OCI-LY7 (cell line): ENCODE measurements at regions of chr3 and their contacts with region 1.

Region 1: DNA sequence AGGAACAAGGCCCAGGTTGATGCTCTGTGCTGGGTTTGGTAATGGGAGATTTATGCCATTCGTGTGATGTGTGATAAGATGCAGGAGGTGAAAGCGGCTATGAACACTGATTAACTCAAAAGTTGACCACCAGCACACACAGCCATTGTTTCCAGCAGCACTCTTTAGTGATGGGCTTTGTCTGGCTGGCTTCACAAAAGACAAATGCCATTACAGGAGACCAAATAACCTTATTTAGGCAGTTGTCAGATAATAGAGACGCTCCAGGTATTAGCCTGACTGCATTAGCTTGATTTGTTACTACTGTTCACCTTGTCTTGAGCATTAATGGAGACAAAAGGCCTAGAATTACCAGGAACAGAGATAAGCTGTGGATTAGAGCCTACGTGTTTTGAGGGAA is 5.1 kb downstream of the HESX1 start:
- DNase-seq: no peak
- H3K4me3 ChIP-seq: no peak overlapping the region
- H3K27ac ChIP-seq: no peak overlapping the region
- H3K4me1 ChIP-seq: peaks cover 17% of the 10 kb centered on the region
- CTCF ChIP-seq: no peak

Region 2: DNA sequence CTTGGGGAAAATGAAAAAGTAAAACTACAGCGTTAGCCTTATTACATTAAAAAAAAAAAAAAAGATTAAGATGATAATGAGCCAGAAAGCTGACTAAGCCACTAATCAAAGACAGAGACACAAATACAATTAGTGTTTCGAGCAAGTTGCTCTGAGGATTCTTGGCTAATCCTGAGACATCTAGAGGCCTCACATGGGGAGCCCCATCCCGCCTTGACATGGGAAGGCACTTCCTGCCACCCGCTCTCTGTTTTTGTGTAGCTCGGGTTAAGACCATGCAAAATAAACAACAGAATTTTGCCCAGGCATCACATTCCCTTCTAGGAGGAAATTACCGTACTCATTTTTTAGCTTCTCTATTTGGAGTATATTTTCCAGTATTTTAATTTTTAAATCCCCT is 10.1 kb before region 1 on chr3:
- CTCF ChIA-PET with region 1: no interaction called
- POLR2A ChIA-PET with region 1: interaction called, 13 read pairs
- intact Hi-C with region 1: no loop called
- DNase-seq: no peak
- H3K4me3 ChIP-seq: peak overlapping the region; percentile 30
- H3K27ac ChIP-seq: no peak overlapping the region
- H3K4me1 ChIP-seq: peaks cover 30% of the 10 kb centered on the region
- CTCF ChIP-seq: no peak